GM12878 (cell line): ENCODE measurements at regions of chr2 and their contacts with region 1.

Region 1: GRCh38 chr2:170361090-170361936 is 183.4 kb downstream of the MYO3B start:
- DNase-seq: peak; percentile 26
- ATAC-seq: peak; percentile 97
- H3K4me3 ChIP-seq: no peak overlapping the region
- H3K27ac ChIP-seq: no peak overlapping the region
- H3K4me1 ChIP-seq: no peaks in the 10 kb centered on the region
- H3K27me3 ChIP-seq: no peaks in the 10 kb centered on the region
- CTCF ChIP-seq: peak; percentile 76 to 87 (median 80)
- EP300 ChIP-seq: no peak
- POLR2A ChIP-seq: no peak
- RAD21 ChIP-seq: peak; percentile 65

Region 2: GRCh38 chr2:170282851-170283250 is 78.5 kb before region 1 on chr2:
- CTCF ChIA-PET with region 1: no interaction called
- POLR2A ChIA-PET with region 1: no interaction called
- RAD21 ChIA-PET with region 1: no interaction called
- SMC1A ChIA-PET with region 1: no interaction called
- in situ Hi-C with region 1: no loop called
- intact Hi-C with region 1: no loop called
- DNase-seq: no peak
- ATAC-seq: no peak
- H3K4me3 ChIP-seq: no peak overlapping the region
- H3K27ac ChIP-seq: no peak overlapping the region
- H3K4me1 ChIP-seq: no peaks in the 10 kb centered on the region
- H3K27me3 ChIP-seq: no peaks in the 10 kb centered on the region
- CTCF ChIP-seq: no peak
- EP300 ChIP-seq: no peak
- POLR2A ChIP-seq: no peak
- RAD21 ChIP-seq: no peak

Region 3: DNA sequence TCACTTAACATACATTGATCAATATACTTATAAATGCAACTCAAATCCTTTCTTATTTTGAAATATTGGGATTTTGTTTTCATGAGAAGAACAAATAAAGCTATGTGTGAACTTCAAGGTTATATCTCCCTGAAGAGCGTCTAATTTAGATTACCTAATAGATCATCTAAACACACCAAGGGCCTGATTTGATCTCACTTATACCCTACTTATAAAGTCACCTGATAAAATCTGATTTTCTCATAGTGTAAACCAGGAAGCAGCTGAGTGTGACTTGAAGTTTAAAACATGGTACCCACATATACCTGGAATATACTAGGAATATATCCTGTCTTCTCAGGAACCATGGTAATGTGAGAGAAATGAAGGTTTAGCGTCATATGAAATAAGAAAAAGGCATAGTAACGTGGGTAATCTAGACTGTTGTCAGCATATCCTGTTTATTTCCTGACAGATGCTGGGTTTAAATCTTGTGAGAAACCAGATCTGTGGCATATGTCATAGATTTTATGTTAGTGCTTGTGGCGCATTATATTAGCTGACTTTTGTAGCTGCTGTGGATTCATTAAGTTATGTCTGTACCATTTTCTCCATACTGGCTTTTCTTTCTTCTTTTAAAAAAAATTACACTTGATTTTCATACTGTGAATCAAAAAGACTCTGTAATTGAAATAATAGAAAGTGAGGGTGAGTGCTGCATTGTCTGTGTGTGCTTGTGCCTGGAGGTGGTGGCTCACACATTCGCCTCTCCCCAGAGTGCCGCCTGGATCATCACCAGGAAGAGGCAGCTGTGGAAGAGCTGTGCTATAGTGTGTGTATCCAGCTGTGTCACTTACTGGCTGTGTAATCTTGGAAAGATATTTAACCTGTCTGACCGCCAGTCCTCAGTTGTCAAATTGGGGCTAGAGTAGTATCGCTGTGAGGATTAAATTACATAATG is 19.4 kb before region 1 on chr2:
- CTCF ChIA-PET with region 1: interaction called, 68 read pairs
- POLR2A ChIA-PET with region 1: no interaction called
- RAD21 ChIA-PET with region 1: interaction called, 5 read pairs
- SMC1A ChIA-PET with region 1: interaction called, 17 read pairs
- in situ Hi-C with region 1: no loop called
- intact Hi-C with region 1: no loop called
- DNase-seq: no peak
- ATAC-seq: no peak
- H3K4me3 ChIP-seq: no peak overlapping the region
- H3K27ac ChIP-seq: no peak overlapping the region
- H3K4me1 ChIP-seq: peaks cover 29% of the 10 kb centered on the region
- H3K27me3 ChIP-seq: no peaks in the 10 kb centered on the region
- CTCF ChIP-seq: no peak
- EP300 ChIP-seq: no peak
- POLR2A ChIP-seq: no peak
- RAD21 ChIP-seq: no peak

Region 4: GRCh38 chr2:170420961-170421687 is 59.8 kb after region 1 on chr2:
- CTCF ChIA-PET with region 1: no interaction called
- POLR2A ChIA-PET with region 1: no interaction called
- RAD21 ChIA-PET with region 1: no interaction called
- SMC1A ChIA-PET with region 1: no interaction called
- in situ Hi-C with region 1: no loop called
- intact Hi-C with region 1: no loop called
- DNase-seq: no peak
- ATAC-seq: no peak
- H3K4me3 ChIP-seq: no peak overlapping the region
- H3K27ac ChIP-seq: no peak overlapping the region
- H3K4me1 ChIP-seq: peaks cover 3% of the 10 kb centered on the region; the same call in 1 of the 2 replicates
- H3K27me3 ChIP-seq: no peaks in the 10 kb centered on the region
- CTCF ChIP-seq: no peak
- EP300 ChIP-seq: no peak
- POLR2A ChIP-seq: no peak
- RAD21 ChIP-seq: no peak